Tibial artery (tissue), 4 donors: ENCODE measurements at regions of chr14 and their contacts with region 1.

Region 1: GRCh38 chr14:73713803-73714655 is at the start of gene PNMA1:
- DNase-seq: peak; percentile 89 to 95
- H3K4me3 ChIP-seq: peak within 1 kb of the TSS; percentile 91 to 98
- H3K27ac ChIP-seq: peak within 1 kb of the TSS; percentile 97 to 99
- H3K4me1 ChIP-seq: peaks cover 0 to 43% (median 30%) of the 10 kb centered on the region in 4 donors
- H3K27me3 ChIP-seq: no peaks in the 10 kb centered on the region
- CTCF ChIP-seq: no peak

Region 2: GRCh38 chr14:73644531-73645247 is 69.3 kb before region 1 on chr14 and contains the start of gene DNAL1:
- intact Hi-C with region 1: loop called (anchors 5 kb)
- DNase-seq: peak; percentile 91 to 95
- H3K4me3 ChIP-seq: peak within 1 kb of the TSS; percentile 76 to 82
- H3K27ac ChIP-seq: peak within 1 kb of the TSS; percentile 87 to 89
- H3K4me1 ChIP-seq: peaks cover 0 to 16% (median 12%) of the 10 kb centered on the region in 4 donors
- H3K27me3 ChIP-seq: no peaks in the 10 kb centered on the region
- CTCF ChIP-seq: peak in 1 of 2 experiments; percentile 13

Region 3: DNA sequence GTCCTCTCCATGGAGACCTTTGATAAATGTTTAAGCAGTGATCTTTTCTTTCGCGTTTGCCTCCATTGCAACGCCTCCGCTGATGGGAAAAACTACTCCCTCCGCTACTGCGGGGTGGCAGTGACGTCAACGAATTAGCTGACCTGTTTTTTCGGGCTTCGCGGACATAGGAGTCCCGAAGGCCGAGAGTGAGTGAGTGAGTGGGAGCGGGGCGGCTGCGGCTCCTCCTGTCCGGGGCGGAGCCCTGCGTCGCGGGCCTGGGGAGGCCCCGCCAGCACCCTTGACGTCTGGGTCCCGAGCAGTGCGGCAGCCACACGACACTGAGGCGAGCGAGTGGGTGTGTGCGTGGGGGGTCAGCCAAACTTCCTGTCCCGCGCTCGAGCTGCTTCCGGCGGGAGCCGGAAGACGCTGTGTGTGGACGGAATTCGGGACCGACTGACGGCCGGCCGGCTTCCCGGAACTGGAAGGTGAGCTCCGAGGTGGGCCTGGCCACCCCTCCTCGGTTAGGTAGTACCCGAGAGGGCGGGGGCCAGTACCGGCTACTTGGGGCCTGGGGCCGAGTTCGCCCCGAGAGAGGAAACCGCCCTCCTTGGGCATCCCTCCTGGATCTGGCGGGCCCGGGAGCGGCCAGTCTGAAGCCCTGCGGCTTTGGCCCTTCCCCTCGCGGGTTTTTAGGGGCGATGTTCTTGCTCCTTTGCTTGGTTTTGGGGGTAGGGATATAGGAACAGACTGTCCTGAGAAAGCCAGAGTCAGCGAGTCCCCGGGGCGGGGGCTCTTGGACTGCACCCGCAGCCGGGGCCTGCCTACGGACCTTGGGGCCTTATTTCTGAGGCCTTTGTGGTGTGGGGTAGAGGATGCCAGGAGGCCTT is 172.7 kb after region 1 on chr14 and contains the start of gene ZNF410:
- intact Hi-C with region 1: loop called (anchors 5 kb)
- DNase-seq: peak; percentile 94 to 98
- H3K4me3 ChIP-seq: peak within 1 kb of the TSS; percentile 74 to 98
- H3K27ac ChIP-seq: peak within 1 kb of the TSS; percentile 93 to 95
- H3K4me1 ChIP-seq: peaks cover 0 to 33% (median 23%) of the 10 kb centered on the region in 4 donors
- H3K27me3 ChIP-seq: no peaks in the 10 kb centered on the region
- CTCF ChIP-seq: no peak